Mammary epithelial cell (primary cell): ENCODE measurements at regions of chrX and their contacts with region 1.

Region 1: GRCh38 chrX:154308108-154308946 is 12.7 kb downstream of the TKTL1 start:
- DNase-seq: peak; percentile 21
- H3K4me3 ChIP-seq: no peak overlapping the region
- H3K27ac ChIP-seq: no peak overlapping the region
- H3K4me1 ChIP-seq: no peaks in the 10 kb centered on the region
- H3K27me3 ChIP-seq: no peaks in the 10 kb centered on the region
- CTCF ChIP-seq: peak; percentile 68 to 73

Region 2: DNA sequence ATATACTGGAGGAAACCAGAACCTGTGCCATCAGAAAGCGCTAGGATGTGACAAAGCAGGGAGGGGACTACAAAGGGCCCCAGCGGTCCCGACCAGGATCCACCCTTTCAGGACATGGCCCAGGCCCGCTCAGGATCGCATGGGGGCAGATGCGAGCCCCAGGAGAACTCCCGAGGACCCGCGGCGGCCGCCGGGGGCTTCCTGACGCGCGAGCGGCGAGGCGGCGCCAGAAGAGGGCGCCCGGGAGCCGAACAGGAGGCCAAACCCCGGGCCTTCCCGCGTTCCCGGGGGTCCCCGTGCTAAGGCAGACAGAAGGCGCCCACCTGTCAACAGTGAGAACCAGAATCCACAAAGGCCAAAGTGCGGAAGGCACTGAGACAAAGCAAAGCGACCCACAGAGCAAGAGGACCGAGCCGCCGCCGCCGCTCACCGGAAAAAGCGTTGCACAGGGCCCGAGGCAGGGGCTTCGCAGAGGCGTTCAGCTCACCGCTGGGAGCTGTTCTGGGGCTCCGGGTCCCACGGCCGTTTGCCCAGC is 171.6 kb before region 1 on chrX:
- CTCF ChIA-PET with region 1: interaction called, 3 read pairs
- dilution Hi-C with region 1: no loop called
- in situ Hi-C with region 1: no loop called
- intact Hi-C with region 1: loop called (anchors 1 kb)
- DNase-seq: peak; percentile 14
- H3K4me3 ChIP-seq: peak overlapping the region in 2 of 3 experiments; percentile 23 to 33
- H3K27ac ChIP-seq: no peak overlapping the region
- H3K4me1 ChIP-seq: no peaks in the 10 kb centered on the region
- H3K27me3 ChIP-seq: no peaks in the 10 kb centered on the region
- CTCF ChIP-seq: peak; percentile 10 to 76